ENCODE measurements at regions of chr7 and their contacts with region 1.

Region 1: DNA sequence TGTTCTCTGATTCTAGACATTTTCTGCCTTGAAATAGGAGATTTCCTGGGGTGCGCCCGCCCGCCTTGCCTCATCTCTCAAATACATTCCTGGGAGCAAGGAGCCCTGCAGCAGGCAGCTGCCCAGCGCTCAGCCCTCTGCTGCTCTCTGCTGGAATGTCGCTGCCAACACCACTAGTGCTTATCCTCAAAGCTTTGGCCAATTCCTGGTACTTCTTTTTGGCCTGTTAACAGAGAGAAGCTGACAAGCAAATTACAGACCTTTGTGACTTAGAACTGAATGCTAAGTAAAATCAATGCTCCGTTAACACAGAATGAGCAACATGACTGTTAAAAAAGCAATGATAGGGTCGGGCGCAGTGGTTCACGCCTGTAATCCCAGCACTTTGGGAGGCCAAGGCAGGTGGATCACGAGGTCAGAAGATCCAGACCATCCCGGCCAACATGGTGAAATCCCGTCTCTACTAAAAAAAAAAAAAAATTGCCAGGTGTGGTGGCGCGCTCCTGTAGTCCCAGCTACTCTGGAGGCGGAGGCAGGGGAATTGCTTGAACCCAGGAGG is 41.9 kb upstream of the SYPL1 start:
- DNase-seq: peak; percentile 88 to 92 (median 91)
- H3K4me3 ChIP-seq: no peak overlapping the region
- H3K27ac ChIP-seq: no peak overlapping the region
- H3K4me1 ChIP-seq: peaks cover 0 to 17% (median 4%) of the 10 kb centered on the region in 3 donors
- H3K27me3 ChIP-seq: no peaks in the 10 kb centered on the region
- CTCF ChIP-seq: peak; percentile 99

Region 2: DNA sequence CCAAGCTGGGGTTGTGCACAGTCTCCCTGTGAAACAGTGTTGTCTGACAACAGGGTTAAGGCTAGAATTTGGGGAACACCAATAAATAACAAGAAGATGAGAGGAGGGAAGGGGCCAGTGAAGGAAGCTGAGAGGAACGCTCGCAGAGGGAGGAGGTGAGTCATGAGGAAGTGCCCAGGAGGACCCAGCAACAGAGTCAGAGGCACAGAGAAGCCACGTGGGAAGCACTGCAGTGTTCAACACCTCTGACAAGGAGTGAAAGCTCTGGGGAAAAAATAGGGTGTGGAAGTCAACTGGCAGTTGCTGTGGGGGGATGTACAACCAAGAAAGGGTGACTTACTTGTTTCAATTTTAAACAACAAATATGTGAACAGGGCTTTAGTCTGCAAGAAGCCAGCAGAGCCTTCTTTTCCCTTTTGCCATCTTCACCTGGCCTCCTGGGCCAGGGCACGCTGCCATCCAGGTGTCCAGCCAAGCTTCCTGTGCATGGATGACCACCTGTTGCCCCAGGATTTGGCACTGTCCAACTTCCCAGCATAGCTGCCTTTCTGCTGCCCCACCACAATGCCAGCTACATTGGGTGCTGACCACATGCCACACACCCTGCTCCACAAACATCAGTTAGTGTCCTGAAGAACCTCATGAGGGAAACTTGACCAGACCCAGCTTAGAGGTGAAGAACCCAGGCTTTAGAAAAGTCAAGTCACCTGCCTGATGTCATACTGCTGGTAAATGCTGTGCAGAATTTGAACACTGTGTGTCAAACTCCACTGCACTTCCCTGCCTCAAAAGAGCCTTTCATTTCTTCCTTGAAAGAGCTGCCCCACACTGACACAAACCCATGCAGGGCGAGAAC is 347.1 kb before region 1 on chr7:
- intact Hi-C with region 1: no loop called
- DNase-seq: no peak
- H3K4me3 ChIP-seq: no peak overlapping the region
- H3K27ac ChIP-seq: no peak overlapping the region
- H3K4me1 ChIP-seq: peaks cover 0 to 3% (median 0%) of the 10 kb centered on the region in 3 donors
- H3K27me3 ChIP-seq: no peaks in the 10 kb centered on the region
- CTCF ChIP-seq: no peak

Region 3: GRCh38 chr7:106056513-106057203 is 97.3 kb before region 1 on chr7:
- intact Hi-C with region 1: loop called (anchors 5 kb)
- DNase-seq: peak; percentile 79 to 88 (median 85)
- H3K4me3 ChIP-seq: no peak overlapping the region
- H3K27ac ChIP-seq: no peak overlapping the region
- H3K4me1 ChIP-seq: peaks cover 2 to 20% (median 6%) of the 10 kb centered on the region in 3 donors
- H3K27me3 ChIP-seq: no peaks in the 10 kb centered on the region
- CTCF ChIP-seq: peak; percentile 94